Activated CD8-positive, alpha-beta memory T cell treated with anti-CD3 and anti-CD28 coated beads, Interleukin-2, amount 10 ng/mL, durations not matched to agents 7 days and 5 days (primary cell): ENCODE measurements at regions of chr19 and their contacts with region 1.

Region 1: GRCh38 chr19:33778089-33778791 is 18.4 kb upstream of the KCTD15 start:
- DNase-seq: peak; percentile 84
- ATAC-seq: peak; percentile 93
- H3K4me3 Mint-ChIP-seq: no peak overlapping the region
- H3K27ac Mint-ChIP-seq: no peak overlapping the region
- H3K4me1 Mint-ChIP-seq: peaks cover 8% of the 10 kb centered on the region
- H3K27me3 Mint-ChIP-seq: peaks cover 17% of the 10 kb centered on the region

Region 2: GRCh38 chr19:33795370-33796163 is 17.3 kb after region 1 on chr19:
- CTCF ChIA-PET with region 1: interaction called, 14 read pairs
- DNase-seq: no peak
- ATAC-seq: peak; percentile 63
- H3K4me3 Mint-ChIP-seq: peak overlapping the region; percentile 48
- H3K27ac Mint-ChIP-seq: no peak overlapping the region
- H3K4me1 Mint-ChIP-seq: peaks cover 3% of the 10 kb centered on the region
- H3K27me3 Mint-ChIP-seq: peaks cover 45% of the 10 kb centered on the region

Region 3: GRCh38 chr19:33998739-33999345 is 220.6 kb after region 1 on chr19:
- CTCF ChIA-PET with region 1: interaction called, 17 read pairs
- DNase-seq: no peak
- ATAC-seq: no peak
- H3K4me3 Mint-ChIP-seq: no peak overlapping the region
- H3K27ac Mint-ChIP-seq: no peak overlapping the region
- H3K4me1 Mint-ChIP-seq: no peaks in the 10 kb centered on the region
- H3K27me3 Mint-ChIP-seq: peaks cover 20% of the 10 kb centered on the region

Region 4: DNA sequence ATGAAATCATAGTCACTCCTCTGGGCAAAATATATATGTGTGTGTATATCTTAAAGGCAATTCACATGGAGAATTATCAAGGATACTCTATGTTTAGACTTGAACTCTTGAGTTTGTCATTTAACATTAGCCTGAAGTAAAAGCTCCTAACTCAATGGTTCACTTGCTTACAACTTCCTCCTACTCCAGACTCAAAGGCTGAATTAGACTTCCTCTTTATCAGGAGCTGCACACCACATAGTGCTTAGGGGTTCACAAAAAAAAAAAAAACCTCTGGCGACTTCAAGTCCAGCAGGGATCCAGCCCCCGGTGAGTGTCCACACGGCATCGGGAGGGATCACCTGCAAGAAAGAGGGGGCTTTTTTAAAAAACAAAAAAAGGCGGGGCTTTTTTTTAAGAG is 325.9 kb after region 1 on chr19:
- CTCF ChIA-PET with region 1: interaction called, 13 read pairs
- DNase-seq: no peak
- ATAC-seq: no peak
- H3K4me3 Mint-ChIP-seq: no peak overlapping the region
- H3K27ac Mint-ChIP-seq: no peak overlapping the region
- H3K4me1 Mint-ChIP-seq: no peaks in the 10 kb centered on the region
- H3K27me3 Mint-ChIP-seq: peaks cover 25% of the 10 kb centered on the region